ENCODE measurements at regions of chr1 and their contacts with region 1.

Region 1: GRCh38 chr1:6235296-6235677 is 477 bp downstream of the ICMT start:
- DNase-seq: no peak
- ATAC-seq: peak; percentile 7
- H3K4me3 Mint-ChIP-seq: peak overlapping the region; percentile 88
- H3K27ac Mint-ChIP-seq: peak overlapping the region; percentile 78
- H3K4me1 Mint-ChIP-seq: peaks cover 12% of the 10 kb centered on the region
- H3K27me3 Mint-ChIP-seq: peaks cover 11% of the 10 kb centered on the region

Region 2: GRCh38 chr1:6026095-6026809 is 209.0 kb before region 1 on chr1:
- CTCF ChIA-PET with region 1: no interaction called
- POLR2A ChIA-PET with region 1: no interaction called
- intact Hi-C with region 1: loop called in 1 of 2 experiments (anchors 2 kb)
- DNase-seq: peak; percentile 97
- ATAC-seq: peak; percentile 81
- H3K4me3 Mint-ChIP-seq: peak overlapping the region; percentile 97
- H3K27ac Mint-ChIP-seq: peak overlapping the region; percentile 97
- H3K4me1 Mint-ChIP-seq: peaks cover 40% of the 10 kb centered on the region
- H3K27me3 Mint-ChIP-seq: no peaks in the 10 kb centered on the region

Region 3: DNA sequence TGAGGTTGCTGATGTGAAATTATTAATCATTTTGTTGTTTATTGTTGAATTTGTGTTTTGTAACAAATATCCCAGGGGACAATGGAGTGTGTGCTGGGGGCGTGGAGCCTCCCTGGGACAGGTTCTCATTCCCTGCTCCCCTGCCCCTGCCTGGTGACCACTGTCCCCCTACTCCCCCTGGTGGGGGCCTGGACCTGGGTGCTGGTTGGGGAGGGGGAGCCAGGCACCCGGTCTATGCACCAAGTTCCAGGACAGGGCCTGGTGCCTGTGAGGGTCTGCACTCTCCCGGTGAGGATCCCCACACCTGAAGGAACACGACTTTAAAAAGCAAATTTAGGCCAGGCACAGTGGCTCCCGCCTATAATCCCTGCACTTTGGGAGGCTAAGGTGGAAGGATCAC is 97.5 kb before region 1 on chr1:
- CTCF ChIA-PET with region 1: no interaction called
- POLR2A ChIA-PET with region 1: no interaction called
- intact Hi-C with region 1: no loop called
- DNase-seq: no peak
- ATAC-seq: no peak
- H3K4me3 Mint-ChIP-seq: no peak overlapping the region
- H3K27ac Mint-ChIP-seq: no peak overlapping the region
- H3K4me1 Mint-ChIP-seq: no peaks in the 10 kb centered on the region
- H3K27me3 Mint-ChIP-seq: no peaks in the 10 kb centered on the region

Region 4: DNA sequence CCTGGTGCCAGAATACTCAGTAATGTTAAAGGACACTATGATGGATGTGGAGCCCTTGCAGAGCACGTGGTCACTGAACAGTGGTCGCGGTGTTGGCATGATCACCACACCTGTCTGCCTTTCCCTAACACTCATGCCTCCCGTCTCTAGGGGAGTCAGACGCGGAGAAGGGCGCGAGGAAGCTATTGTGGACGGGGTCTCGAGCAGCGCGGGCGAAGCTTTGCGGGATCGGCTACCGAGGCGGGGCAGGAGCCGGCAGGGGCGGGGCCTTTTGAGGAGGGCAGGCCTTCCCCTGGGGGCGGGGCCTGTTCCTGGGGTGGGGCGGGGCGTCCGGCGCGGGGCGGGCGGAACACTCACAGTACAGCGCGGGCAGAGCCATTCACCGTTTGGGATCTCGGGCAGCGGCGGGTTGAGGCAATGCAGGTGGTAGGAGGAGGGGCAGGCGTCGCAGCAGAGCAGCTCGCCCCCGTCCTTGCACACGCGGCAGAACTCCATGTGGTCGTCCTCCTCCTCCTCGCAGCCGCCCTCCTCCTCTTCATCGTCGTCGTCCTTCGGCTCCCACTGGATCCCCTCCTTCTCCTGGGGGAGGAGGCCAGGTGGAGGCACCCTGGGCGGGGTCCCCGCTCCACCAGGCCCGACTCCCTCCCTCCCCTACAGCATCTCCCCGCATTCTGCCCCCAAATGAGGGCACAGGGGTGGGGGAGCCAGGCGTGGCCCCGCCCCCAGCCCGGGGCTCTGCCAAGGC is 86.6 kb before region 1 on chr1:
- CTCF ChIA-PET with region 1: no interaction called
- POLR2A ChIA-PET with region 1: no interaction called
- intact Hi-C with region 1: loop called in 1 of 2 experiments (anchors 1 kb)
- DNase-seq: peak; percentile 90
- ATAC-seq: peak; percentile 98
- H3K4me3 Mint-ChIP-seq: peak overlapping the region; percentile 28
- H3K27ac Mint-ChIP-seq: no peak overlapping the region
- H3K4me1 Mint-ChIP-seq: peaks cover 5% of the 10 kb centered on the region
- H3K27me3 Mint-ChIP-seq: peaks cover 7% of the 10 kb centered on the region

Region 5: DNA sequence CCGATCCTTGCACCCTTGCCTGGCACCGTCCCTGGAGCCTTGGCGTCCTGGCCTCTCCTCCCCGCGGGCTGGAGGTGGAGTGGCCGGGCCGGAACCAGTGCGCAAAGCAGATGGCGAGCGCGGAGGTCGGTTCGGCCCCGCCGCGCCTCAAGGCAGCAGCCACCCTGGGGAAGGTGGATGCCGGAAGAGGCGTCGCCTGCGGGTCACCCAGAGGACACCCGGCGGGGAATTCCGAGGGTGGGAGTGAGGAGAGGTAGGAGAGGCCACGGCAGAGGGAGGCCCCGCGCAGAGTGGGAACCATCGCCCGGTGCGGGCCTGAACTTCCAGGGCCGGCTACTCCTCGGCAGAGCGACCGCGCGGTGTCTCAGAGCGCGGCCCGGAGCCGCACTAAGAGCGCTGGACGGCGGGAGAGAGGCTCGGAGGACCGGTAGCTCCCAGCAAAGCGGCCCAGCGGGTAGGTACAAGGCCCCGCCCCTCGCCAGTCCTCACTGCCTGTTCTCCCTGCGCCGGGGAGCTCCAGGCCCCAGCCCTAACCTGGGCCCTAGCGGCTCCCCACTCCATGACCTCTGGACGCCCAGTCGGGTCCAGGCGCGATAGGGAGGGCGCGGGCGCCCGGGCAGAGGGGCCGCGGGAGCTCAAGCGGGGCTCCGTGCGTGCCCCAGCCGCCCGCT is 29.3 kb before region 1 on chr1 and contains the start of gene RNF207:
- CTCF ChIA-PET with region 1: interaction called, 5 read pairs
- POLR2A ChIA-PET with region 1: interaction called, 4 read pairs
- intact Hi-C with region 1: loop called (anchors 1 to 2 kb)
- DNase-seq: peak; percentile 85
- ATAC-seq: peak; percentile 75
- H3K4me3 Mint-ChIP-seq: peak within 1 kb of the TSS; percentile 77
- H3K27ac Mint-ChIP-seq: peak within 1 kb of the TSS; percentile 67
- H3K4me1 Mint-ChIP-seq: peaks cover 3% of the 10 kb centered on the region
- H3K27me3 Mint-ChIP-seq: peaks cover 8% of the 10 kb centered on the region
- total RNA-seq, gene RNF207: 13.5 to 15.2 TPM

Region 6: DNA sequence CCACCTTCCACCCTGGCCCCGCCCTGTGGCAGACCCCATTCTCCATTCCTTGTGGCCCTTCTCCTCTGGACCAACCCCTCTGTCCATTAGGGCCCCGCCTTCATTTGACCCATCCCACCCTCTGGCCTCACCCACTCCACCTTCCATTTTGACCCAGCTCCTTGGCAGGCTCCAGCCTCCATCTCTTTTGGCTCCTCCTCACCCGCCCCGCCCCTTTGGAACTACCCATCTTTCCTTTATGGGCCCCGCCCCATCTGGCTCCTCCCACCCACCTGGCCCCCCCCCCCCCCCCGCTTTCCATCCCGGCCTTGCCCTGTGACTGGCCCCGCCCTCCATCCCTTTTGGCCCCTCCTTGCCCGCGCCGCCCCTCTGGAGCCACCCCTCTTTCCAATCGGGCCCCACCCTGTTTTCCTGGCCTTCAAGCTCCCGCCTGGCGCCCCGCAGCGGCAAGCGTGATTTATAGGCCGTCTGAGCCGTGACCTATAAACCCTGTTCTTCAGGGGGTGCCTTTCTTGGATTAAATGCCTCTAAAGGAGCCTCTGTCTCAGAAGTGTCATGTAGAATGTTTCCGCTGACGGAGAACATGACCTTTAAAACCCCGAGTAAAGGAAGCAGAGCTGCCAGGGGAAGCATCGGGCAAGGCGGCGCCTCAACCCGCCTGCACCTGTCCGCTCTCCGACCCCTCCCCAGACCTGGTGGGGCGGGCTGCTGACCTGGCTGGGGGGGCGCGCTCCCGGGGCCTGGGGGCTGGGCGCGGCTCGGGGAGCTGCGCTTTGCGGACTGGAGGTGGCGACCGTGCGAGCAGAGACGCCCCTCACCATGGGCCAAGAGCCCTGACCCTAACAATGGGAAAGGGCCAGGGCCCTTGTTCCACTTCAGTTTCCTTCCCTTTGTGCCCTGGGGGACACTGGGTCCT is 728.0 kb after region 1 on chr1:
- CTCF ChIA-PET with region 1: no interaction called
- POLR2A ChIA-PET with region 1: no interaction called
- intact Hi-C with region 1: loop called in 1 of 2 experiments (anchors 5 kb)
- DNase-seq: peak; percentile 93
- ATAC-seq: peak; percentile 63
- H3K4me3 Mint-ChIP-seq: peak overlapping the region; percentile 69
- H3K27ac Mint-ChIP-seq: peak overlapping the region; percentile 85
- H3K4me1 Mint-ChIP-seq: peaks cover 22% of the 10 kb centered on the region
- H3K27me3 Mint-ChIP-seq: peaks cover 8% of the 10 kb centered on the region